ENCODE measurements at regions of chr7 and their contacts with region 1.

Region 1: GRCh38 chr7:142853739-142854371 is 1.0 kb upstream of the EPHB6 start:
- DNase-seq: peak in 1 of 2 donors; percentile 74
- H3K4me3 ChIP-seq: peak overlapping the region; percentile 77 to 78
- H3K27ac ChIP-seq: peak overlapping the region; percentile 42 to 80
- H3K4me1 ChIP-seq: peaks cover 0 to 8% of the 10 kb centered on the region in 2 donors
- H3K27me3 ChIP-seq: no peaks in the 10 kb centered on the region
- CTCF ChIP-seq: peak; percentile 64 to 83 (median 83)

Region 2: GRCh38 chr7:142168745-142169144 is 685.1 kb before region 1 on chr7:
- intact Hi-C with region 1: no loop called
- DNase-seq: no peak
- H3K4me3 ChIP-seq: no peak overlapping the region
- H3K27ac ChIP-seq: no peak overlapping the region
- H3K4me1 ChIP-seq: no peaks in the 10 kb centered on the region
- H3K27me3 ChIP-seq: no peaks in the 10 kb centered on the region
- CTCF ChIP-seq: no peak

Region 3: GRCh38 chr7:142833174-142834048 is 20.4 kb before region 1 on chr7:
- intact Hi-C with region 1: no loop called
- DNase-seq: no peak
- H3K4me3 ChIP-seq: no peak overlapping the region
- H3K27ac ChIP-seq: no peak overlapping the region
- H3K4me1 ChIP-seq: no peaks in the 10 kb centered on the region
- H3K27me3 ChIP-seq: no peaks in the 10 kb centered on the region
- CTCF ChIP-seq: no peak

Region 4: DNA sequence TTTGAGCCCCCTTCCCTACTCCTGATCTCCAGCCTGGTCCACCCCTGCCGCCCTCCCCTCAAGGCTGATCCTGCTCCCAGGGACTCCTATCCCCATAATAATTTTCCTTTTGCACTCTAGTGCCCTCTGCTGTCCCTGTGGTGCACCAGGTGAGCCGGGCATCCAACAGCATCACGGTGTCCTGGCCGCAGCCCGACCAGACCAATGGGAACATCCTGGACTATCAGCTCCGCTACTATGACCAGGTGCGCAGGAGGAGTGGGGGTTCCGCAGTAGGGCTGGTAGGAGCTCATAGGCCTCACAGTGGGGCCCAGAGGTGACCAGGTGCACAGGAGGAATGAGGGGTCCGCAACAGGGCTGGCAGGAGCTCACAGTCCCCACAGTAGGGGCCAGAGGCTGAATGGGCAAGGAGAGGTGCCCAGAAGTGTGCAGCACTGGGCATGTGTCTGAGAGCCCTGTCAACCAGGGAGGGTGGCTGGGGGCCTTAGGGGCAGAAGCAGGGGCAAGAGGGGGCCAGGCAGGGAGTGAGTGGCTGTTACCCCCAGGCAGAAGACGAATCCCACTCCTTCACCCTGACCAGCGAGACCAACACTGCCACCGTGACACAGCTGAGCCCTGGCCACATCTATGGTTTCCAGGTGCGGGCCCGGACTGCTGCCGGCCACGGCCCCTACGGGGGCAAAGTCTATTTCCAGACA is 12.7 kb after region 1 on chr7:
- intact Hi-C with region 1: loop called (anchors 1 kb)
- DNase-seq: no peak
- H3K4me3 ChIP-seq: no peak overlapping the region
- H3K27ac ChIP-seq: no peak overlapping the region
- H3K4me1 ChIP-seq: no peaks in the 10 kb centered on the region
- H3K27me3 ChIP-seq: no peaks in the 10 kb centered on the region
- CTCF ChIP-seq: peak in 2 of 3 experiments; percentile 28 to 60

Region 5: GRCh38 chr7:143008007-143008901 is 154.4 kb after region 1 on chr7:
- intact Hi-C with region 1: loop called (anchors 2 kb)
- DNase-seq: peak in 1 of 2 donors; percentile 79
- H3K4me3 ChIP-seq: no peak overlapping the region
- H3K27ac ChIP-seq: no peak overlapping the region
- H3K4me1 ChIP-seq: no peaks in the 10 kb centered on the region
- H3K27me3 ChIP-seq: no peaks in the 10 kb centered on the region
- CTCF ChIP-seq: peak; percentile 83 to 95 (median 94)

Region 6: DNA sequence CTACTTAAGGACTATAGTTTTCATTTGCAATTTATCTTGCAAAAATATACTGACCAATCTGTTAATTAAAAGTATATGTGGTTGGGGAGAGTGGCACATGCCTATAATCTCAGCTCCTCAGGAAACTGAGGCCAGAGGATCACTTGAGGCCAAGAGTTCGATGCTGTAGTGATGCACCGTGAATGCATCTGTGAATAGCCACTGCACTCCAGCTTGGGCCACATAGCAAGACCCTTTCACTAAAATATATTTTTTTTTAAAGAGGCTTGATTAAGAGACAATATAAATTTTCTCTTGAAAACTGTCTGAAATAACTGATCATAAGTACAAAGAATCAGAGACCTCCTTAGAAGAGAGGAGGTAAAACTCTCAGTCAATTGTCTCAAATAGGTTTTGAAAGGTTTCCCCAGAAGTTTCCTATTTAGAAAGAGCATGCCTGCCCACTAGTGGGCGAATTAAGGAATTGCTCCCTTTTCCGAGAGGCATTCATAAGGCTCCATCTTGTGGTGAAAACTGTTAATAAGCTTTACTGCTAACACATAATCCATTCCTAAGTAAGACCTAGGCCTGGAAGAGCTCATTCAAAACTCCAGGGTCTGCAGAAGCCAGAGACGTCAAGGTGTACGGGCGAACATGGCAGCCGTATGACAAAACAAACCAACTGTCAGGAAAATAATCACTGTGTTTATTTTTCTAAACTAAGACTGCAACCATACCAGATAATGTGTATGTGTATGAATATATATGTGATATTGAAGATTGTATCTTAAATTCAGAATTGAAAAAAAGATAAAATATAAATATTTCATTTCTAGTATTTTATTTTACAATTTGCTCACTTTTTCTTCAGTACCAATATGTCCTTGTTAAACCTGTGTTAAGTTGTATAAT is 361.2 kb after region 1 on chr7:
- intact Hi-C with region 1: loop called (anchors 2 kb)
- DNase-seq: peak in 1 of 2 donors; percentile 73
- H3K4me3 ChIP-seq: no peak overlapping the region
- H3K27ac ChIP-seq: no peak overlapping the region
- H3K4me1 ChIP-seq: no peaks in the 10 kb centered on the region
- H3K27me3 ChIP-seq: no peaks in the 10 kb centered on the region
- CTCF ChIP-seq: peak; percentile 90 to 98 (median 97)

Region 7: DNA sequence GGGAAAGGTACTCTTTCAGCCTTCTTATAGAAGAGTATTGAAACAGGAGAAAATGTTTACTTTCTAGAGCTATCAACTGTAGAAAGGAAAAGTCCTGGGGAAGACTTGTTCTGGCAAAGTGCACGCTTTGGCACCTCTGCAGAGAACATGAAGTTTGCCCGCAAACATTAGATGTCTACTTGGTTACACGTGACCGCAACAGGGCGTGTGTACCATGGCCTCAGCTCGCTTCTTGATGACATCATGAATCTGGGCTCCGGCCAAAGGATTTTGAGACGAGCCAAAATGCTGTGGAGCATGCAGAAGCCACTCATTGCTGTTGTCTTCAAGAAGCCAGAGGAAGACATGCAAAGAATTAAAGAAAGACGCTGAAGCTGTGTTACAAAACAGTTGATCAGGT is 580.8 kb after region 1 on chr7:
- intact Hi-C with region 1: no loop called
- DNase-seq: no peak
- H3K4me3 ChIP-seq: no peak overlapping the region
- H3K27ac ChIP-seq: no peak overlapping the region
- H3K4me1 ChIP-seq: no peaks in the 10 kb centered on the region
- H3K27me3 ChIP-seq: no peaks in the 10 kb centered on the region
- CTCF ChIP-seq: no peak

Measured in ascending aorta (tissue), 2 donors.